Panc1 (cell line): ENCODE measurements at regions of chr5 and their contacts with region 1.

Region 1: DNA sequence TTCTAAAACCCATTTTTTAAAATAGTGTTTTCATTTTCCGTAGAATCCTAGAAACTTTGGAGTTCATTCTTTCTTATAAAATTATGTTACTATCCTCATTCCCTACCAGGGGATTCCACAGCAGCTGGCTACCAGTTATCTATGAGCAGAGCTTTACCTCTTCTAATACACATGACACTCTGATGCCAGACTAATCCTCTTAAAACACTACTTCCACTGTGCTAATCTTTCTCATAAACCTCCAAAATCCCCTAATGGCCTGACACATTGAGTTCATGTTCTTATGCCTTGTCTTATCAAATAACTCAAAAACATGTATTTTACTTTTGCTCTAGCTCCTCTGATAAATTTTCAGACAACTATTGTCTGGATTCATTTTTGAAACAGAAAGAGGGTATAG is 633.6 kb upstream of the FTMT start:
- DNase-seq: no peak
- ATAC-seq: no peak
- H3K4me3 ChIP-seq: no peak overlapping the region
- H3K27ac ChIP-seq: no peak overlapping the region
- H3K4me1 ChIP-seq: no peaks in the 10 kb centered on the region
- H3K27me3 ChIP-seq: no peaks in the 10 kb centered on the region
- CTCF ChIP-seq: no peak

Region 2: DNA sequence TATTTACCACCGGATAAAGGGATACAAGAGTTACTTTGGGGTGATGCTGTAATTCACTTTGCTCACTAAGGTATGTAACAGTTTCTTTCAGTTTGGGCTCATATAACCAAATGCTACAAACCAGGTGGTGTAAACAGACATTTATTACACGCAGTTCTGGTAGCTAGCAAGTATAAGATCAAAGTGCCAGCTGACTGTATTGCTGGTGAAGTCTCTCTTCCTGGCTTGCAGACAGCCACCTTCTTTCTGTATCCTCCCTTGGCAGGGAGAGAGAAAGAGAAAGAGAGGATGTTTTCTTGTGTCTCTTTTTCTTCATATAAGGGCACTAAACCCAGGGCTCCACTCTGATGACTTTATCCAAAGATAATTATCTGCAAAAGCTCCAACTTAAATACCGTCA is 81.1 kb after region 1 on chr5:
- CTCF ChIA-PET with region 1: no interaction called
- POLR2A ChIA-PET with region 1: interaction called, 12 read pairs
- in situ Hi-C with region 1: no loop called
- intact Hi-C with region 1: no loop called
- DNase-seq: no peak
- ATAC-seq: no peak
- H3K4me3 ChIP-seq: no peak overlapping the region
- H3K27ac ChIP-seq: no peak overlapping the region
- H3K4me1 ChIP-seq: no peaks in the 10 kb centered on the region
- H3K27me3 ChIP-seq: no peaks in the 10 kb centered on the region
- CTCF ChIP-seq: no peak

Region 3: GRCh38 chr5:121325930-121326329 is 107.8 kb after region 1 on chr5:
- CTCF ChIA-PET with region 1: no interaction called
- POLR2A ChIA-PET with region 1: no interaction called
- in situ Hi-C with region 1: no loop called
- intact Hi-C with region 1: loop called (anchors 10 kb)
- DNase-seq: peak; percentile 8
- ATAC-seq: no peak
- H3K4me3 ChIP-seq: no peak overlapping the region
- H3K27ac ChIP-seq: no peak overlapping the region
- H3K4me1 ChIP-seq: no peaks in the 10 kb centered on the region
- H3K27me3 ChIP-seq: no peaks in the 10 kb centered on the region
- CTCF ChIP-seq: no peak